ENCODE measurements at regions of chr3 and their contacts with region 1.

Region 1: DNA sequence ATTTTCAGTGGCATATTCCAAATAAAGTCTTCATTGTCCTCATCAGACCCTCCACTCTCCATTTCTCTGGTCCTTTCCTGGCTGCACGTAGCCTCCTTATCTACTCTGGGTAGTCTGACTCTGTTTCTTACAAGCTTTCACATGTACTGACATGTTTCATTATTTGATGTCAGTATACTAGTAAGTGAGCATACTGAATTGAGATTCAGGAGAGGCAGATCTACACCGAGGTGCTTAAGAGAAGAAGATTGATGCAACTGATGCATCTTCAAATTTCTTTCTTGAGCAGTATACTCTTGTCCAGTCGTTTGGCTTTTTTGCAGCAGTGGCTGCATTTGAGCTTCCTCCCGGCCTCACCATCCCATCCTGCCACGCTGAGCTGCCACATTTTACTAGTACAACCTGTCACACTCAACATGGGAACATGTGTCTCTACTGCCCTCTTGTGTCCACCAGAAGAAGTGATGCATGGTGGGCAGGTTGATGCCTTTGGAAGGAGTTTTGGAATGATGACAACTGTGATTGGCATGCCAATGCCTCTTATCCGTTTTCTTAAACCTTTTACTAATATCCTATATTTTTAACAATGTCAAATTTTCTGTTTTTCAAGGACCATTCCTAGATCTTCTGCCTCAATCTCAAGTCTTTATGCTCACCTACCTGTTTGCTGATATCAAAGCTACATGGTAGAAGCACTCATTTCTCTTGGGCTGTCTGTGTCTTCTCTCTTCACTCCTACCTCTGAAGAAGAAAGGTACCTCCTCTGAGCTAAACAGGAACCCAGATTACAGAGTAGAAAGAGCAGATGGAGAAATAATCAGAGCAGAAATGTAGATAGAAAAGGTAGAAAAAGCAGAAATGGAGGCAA is 38.7 kb downstream of the GUCA1C start:
- DNase-seq: peak; percentile 61
- CTCF ChIP-seq: peak; percentile 86

Region 2: GRCh38 chr3:108489771-108490170 is 425.2 kb before region 1 on chr3:
- CTCF ChIA-PET with region 1: interaction called, 23 read pairs
- POLR2A ChIA-PET with region 1: no interaction called
- DNase-seq: peak; percentile 53
- CTCF ChIP-seq: peak; percentile 74

Region 3: DNA sequence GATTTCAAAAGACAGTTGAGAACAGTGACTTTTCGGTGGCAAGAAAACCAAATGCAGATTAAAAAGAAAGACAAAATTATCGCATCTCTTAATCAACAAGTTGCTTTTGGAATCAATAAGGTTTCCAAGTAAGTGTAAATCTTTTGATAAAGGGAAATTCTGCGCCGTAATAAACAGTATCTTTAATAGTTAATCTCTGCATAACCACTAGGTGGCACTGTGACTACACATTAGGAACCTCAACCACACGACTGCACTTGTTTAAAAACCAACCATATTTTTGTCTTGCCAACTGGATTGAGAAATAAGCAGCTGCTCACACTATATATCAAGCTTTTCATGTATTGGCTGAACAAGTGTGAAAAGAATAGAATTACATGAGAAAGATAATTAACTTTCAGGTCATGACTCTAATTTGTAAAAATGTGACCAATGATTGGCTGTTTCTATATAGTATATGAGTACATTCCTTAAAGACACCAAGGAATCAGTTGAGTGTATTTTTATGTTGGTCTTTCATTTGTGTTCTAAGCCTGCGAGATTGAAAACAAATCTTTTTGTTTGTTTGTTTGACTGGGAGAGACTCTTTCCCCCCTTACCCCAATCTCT is 252.8 kb before region 1 on chr3:
- CTCF ChIA-PET with region 1: interaction called, 20 read pairs
- POLR2A ChIA-PET with region 1: no interaction called
- DNase-seq: peak; percentile 52
- CTCF ChIP-seq: peak; percentile 69

Region 4: DNA sequence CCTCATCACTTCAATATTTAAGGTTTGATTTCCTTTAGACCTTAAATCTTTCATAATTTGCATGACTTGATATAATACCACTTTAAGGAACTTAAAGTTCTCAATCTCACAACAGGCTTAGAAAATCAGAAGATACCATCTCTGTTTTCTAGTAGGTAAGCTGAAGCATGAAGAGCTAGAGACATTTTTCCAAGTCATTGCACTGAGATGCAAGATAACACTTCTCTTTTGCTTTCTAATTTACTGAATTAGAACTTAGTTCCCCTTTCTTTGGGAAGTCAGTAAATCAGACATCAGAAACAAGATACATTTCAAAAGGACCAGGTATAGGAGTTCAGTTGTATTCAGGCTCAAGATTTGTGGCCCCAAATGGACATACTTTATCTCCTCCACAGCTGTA is 245.8 kb before region 1 on chr3:
- CTCF ChIA-PET with region 1: interaction called, 20 read pairs
- POLR2A ChIA-PET with region 1: no interaction called
- DNase-seq: no peak
- CTCF ChIP-seq: no peak

Region 5: DNA sequence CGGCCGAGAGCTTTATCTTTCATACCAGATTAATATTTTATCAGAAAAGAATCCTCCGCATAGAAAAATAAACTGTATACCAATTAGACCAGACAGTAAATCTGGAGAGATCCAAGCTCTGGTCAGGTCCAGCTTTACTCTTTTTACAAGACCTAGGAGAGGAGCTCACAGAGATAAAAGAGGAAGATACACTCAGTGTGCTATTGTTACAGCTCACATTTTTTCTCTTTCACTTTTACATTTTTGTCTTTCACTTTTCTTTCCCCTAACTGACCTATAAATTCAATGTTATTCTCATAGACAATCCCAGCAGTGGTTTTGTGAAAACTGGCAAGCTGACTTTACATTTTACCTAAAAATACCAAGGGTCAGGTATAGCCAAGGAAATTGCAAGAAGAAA is 17.1 kb before region 1 on chr3:
- CTCF ChIA-PET with region 1: interaction called, 21 read pairs
- POLR2A ChIA-PET with region 1: interaction called, 3 read pairs
- DNase-seq: peak; percentile 32
- CTCF ChIP-seq: no peak

Region 6: DNA sequence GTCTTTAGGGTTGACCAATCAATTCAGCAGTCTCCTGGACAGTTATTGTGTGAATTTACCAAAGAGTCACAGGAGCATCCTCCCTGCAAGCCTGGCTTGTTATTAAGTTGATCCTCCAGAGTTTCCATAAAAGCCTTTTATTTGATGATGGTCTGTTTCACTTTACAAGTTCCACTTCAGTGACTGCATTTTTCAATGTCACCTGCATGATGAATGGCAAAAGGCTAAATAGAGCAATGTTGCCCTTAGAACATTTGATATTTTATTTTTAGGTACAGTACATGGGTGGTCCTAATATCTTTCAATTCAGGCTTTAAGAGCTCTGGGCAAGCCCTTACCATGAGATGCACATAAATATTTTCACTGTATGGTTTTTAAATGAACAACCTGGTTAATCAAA is 16.0 kb after region 1 on chr3:
- CTCF ChIA-PET with region 1: interaction called, 21 read pairs
- POLR2A ChIA-PET with region 1: no interaction called
- DNase-seq: no peak
- CTCF ChIP-seq: no peak

Measured in GM10248 (cell line).